ENCODE measurements at regions of chr1 and their contacts with region 1.

Region 1: DNA sequence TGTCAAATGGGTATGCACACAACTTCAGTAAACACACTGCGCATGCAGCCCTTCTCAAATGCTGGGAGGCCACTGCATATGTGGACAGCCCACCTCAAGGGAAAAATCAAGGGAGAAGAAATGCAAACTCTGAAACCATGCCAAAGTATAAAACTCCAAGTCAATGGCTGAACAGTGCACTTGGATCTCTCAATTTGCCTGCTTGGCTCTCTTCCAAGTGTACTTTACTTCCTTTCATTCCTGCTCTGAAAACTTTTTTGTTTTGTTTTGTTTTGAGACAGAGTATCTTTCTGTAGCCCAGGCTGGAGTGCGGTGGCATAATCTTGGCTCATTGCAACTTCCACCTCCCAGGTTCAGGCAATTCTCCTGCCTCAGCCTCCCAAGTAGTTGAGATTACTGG is 18.8 kb upstream of the COP1 start:
- DNase-seq: no peak
- ATAC-seq: no peak
- H3K4me3 ChIP-seq: no peak overlapping the region
- H3K27ac ChIP-seq: no peak overlapping the region
- H3K4me1 ChIP-seq: no peaks in the 10 kb centered on the region
- H3K27me3 ChIP-seq: no peaks in the 10 kb centered on the region
- CTCF ChIP-seq: no peak

Region 2: DNA sequence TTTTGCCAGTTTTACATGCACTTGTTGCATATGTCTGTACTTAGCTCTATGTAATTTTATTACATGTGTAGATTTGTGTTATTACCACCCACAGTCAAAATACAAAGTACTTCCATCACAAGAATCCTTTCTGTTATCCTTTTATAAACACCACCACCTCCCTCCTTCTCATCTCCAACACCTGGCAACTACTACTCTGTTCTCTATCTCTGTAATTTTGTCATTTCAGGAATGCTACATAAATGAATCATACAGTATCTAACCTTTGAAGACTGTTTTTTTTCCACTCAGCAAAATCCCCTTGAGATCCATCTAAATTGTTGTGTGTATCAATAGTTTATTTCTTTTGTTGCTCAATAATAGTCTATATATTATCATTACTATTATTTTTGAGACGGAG is 45.7 kb after region 1 on chr1:
- CTCF ChIA-PET with region 1: no interaction called
- POLR2A ChIA-PET with region 1: interaction called, 11 read pairs
- in situ Hi-C with region 1: no loop called
- intact Hi-C with region 1: no loop called
- DNase-seq: no peak
- ATAC-seq: no peak
- H3K4me3 ChIP-seq: no peak overlapping the region
- H3K27ac ChIP-seq: no peak overlapping the region
- H3K4me1 ChIP-seq: no peaks in the 10 kb centered on the region
- H3K27me3 ChIP-seq: no peaks in the 10 kb centered on the region
- CTCF ChIP-seq: no peak